ENCODE measurements at regions of chr13 and their contacts with region 1.

Region 1: GRCh38 chr13:112072531-112073244 is 5.7 kb downstream of the SOX1 start:
- DNase-seq: no peak
- H3K4me3 Mint-ChIP-seq: no peak overlapping the region
- H3K27ac Mint-ChIP-seq: no peak overlapping the region
- H3K4me1 Mint-ChIP-seq: no peaks in the 10 kb centered on the region
- H3K27me3 Mint-ChIP-seq: peaks cover 67% of the 10 kb centered on the region

Region 2: GRCh38 chr13:111484141-111484925 is 588.4 kb before region 1 on chr13:
- intact Hi-C with region 1: no loop called
- DNase-seq: no peak
- H3K4me3 Mint-ChIP-seq: no peak overlapping the region
- H3K27ac Mint-ChIP-seq: no peak overlapping the region
- H3K4me1 Mint-ChIP-seq: no peaks in the 10 kb centered on the region
- H3K27me3 Mint-ChIP-seq: no peaks in the 10 kb centered on the region

Region 3: DNA sequence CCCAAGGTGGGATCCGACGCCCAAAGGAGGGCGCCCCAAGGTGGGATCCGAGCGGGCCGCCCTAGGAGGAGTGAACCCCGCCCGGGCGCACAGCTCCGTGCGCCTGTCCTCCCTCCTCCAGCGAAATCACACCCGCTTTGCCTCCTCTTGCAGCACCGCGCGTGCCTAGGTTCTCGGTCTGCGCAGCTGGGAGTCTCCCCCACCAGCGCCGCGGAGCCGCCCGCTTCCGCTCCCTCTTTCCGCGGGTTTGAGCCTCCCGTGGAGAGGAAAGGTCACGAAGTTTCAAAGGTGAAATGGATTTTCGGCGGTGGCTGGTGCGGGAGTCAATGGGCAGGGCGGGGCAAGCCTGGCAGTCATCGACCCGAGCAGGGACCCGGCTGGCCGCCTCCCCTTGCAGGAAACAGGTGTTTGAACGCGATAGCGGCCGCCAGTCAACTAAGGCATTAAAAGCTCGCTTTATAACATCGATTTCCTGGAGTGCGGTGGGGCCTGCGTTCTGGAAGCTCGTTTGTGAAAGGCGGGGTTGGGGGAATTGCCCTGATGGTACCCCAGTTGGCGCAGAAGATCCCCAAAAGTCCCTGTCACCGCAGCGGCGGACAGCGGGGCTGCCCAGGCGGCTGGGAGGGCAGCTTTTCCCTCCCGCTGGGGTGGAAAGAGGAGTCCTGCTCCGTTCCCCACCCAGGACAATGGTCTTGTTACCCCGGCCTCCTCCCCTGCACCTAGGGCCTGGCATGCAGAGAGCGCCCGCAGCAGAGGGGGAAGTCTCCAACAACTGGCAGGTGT is 14.8 kb before region 1 on chr13:
- intact Hi-C with region 1: loop called (anchors 2 kb)
- DNase-seq: peak; percentile 58
- H3K4me3 Mint-ChIP-seq: no peak overlapping the region
- H3K27ac Mint-ChIP-seq: no peak overlapping the region
- H3K4me1 Mint-ChIP-seq: peaks cover 2% of the 10 kb centered on the region
- H3K27me3 Mint-ChIP-seq: peaks cover 68% of the 10 kb centered on the region

Region 4: DNA sequence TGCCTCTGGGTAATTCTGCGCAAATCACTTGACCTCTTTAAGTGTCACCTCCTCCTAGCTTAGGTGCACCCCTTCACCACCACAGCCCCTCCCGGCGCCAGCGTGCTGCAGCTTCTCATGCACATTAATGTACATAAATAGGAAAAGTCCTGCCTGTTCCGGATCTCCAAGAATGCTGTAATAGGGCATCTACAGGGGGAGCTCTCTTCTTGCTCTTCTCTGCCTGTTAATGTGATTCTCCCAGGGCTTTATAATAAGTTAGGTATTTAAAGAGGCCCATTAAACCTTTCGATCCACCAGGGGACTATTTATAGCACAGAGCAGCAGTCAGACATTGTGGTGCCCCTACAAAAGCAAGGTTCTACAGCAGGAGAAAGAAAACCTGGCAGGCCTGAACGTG is 29.6 kb after region 1 on chr13:
- intact Hi-C with region 1: loop called (anchors 5 kb)
- DNase-seq: no peak
- H3K4me3 Mint-ChIP-seq: no peak overlapping the region
- H3K27ac Mint-ChIP-seq: no peak overlapping the region
- H3K4me1 Mint-ChIP-seq: no peaks in the 10 kb centered on the region
- H3K27me3 Mint-ChIP-seq: peaks cover 48% of the 10 kb centered on the region

Region 5: GRCh38 chr13:112213467-112214225 is 141.0 kb after region 1 on chr13:
- intact Hi-C with region 1: no loop called
- DNase-seq: no peak
- H3K4me3 Mint-ChIP-seq: no peak overlapping the region
- H3K27ac Mint-ChIP-seq: no peak overlapping the region
- H3K4me1 Mint-ChIP-seq: no peaks in the 10 kb centered on the region
- H3K27me3 Mint-ChIP-seq: no peaks in the 10 kb centered on the region

Measured in activated CD4-positive, alpha-beta T cell treated with anti-CD3 and anti-CD28 coated beads, Interleukin-2, amount 10 ng/mL, durations not matched to agents 24 days and 14 days (primary cell).